ENCODE measurements at regions of chr1 and their contacts with region 1.

Region 1: GRCh38 chr1:207052911-207053769 is at the start of gene PFKFB2:
- DNase-seq: peak; percentile 100
- H3K4me3 Mint-ChIP-seq: peak within 1 kb of the TSS; percentile 89
- H3K27ac Mint-ChIP-seq: peak within 1 kb of the TSS; percentile 95
- H3K4me1 Mint-ChIP-seq: peaks cover 51% of the 10 kb centered on the region
- H3K27me3 Mint-ChIP-seq: no peaks in the 10 kb centered on the region
- CTCF ChIP-seq: peak; percentile 24
- total RNA-seq, gene PFKFB2: 21.1 and 22.0 TPM in 2 replicates

Region 2: DNA sequence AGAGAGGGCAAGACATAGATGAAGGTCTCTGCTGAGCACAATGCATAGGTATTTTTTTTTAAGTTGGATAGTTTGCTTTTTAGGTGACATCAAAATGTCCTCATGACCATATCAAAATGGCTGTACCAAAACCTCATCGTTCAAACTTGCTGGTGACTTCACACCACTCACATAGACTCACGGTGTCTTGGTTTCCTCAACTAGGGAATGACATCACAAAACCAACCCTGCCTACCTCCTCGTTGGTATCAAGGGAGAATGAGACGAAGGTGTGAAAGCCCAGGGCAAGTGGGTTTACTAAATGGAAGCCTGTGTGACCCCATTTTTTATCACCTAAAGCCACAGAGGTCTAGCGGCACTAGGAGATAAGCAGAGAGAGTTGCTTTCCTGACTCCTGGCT is 108.4 kb before region 1 on chr1:
- CTCF ChIA-PET with region 1: no interaction called
- POLR2A ChIA-PET with region 1: no interaction called
- intact Hi-C with region 1: no loop called
- DNase-seq: no peak
- H3K4me3 Mint-ChIP-seq: no peak overlapping the region
- H3K27ac Mint-ChIP-seq: no peak overlapping the region
- H3K4me1 Mint-ChIP-seq: peaks cover 8% of the 10 kb centered on the region
- H3K27me3 Mint-ChIP-seq: peaks cover 39% of the 10 kb centered on the region
- CTCF ChIP-seq: no peak

Region 3: GRCh38 chr1:207004981-207005830 is 47.9 kb before region 1 on chr1:
- CTCF ChIA-PET with region 1: interaction called, 13 read pairs
- POLR2A ChIA-PET with region 1: interaction called, 24 read pairs
- intact Hi-C with region 1: loop called (anchors 1 kb)
- DNase-seq: peak; percentile 95
- H3K4me3 Mint-ChIP-seq: peak overlapping the region; percentile 1
- H3K27ac Mint-ChIP-seq: peak overlapping the region; percentile 30
- H3K4me1 Mint-ChIP-seq: peaks cover 58% of the 10 kb centered on the region
- H3K27me3 Mint-ChIP-seq: no peaks in the 10 kb centered on the region
- CTCF ChIP-seq: peak; percentile 85

Region 4: GRCh38 chr1:207025144-207025880 is 27.8 kb before region 1 on chr1:
- CTCF ChIA-PET with region 1: interaction called, 168 read pairs
- POLR2A ChIA-PET with region 1: interaction called, 2,100 read pairs
- intact Hi-C with region 1: no loop called
- DNase-seq: no peak
- H3K4me3 Mint-ChIP-seq: peak overlapping the region; percentile 3
- H3K27ac Mint-ChIP-seq: peak overlapping the region; percentile 99
- H3K4me1 Mint-ChIP-seq: peaks cover 73% of the 10 kb centered on the region
- H3K27me3 Mint-ChIP-seq: no peaks in the 10 kb centered on the region
- CTCF ChIP-seq: no peak

Region 5: GRCh38 chr1:207040181-207040533 is 13.0 kb before region 1 on chr1:
- CTCF ChIA-PET with region 1: interaction called, 168 read pairs
- POLR2A ChIA-PET with region 1: interaction called, 2,100 read pairs
- intact Hi-C with region 1: no loop called
- DNase-seq: no peak
- H3K4me3 Mint-ChIP-seq: no peak overlapping the region
- H3K27ac Mint-ChIP-seq: no peak overlapping the region
- H3K4me1 Mint-ChIP-seq: peaks cover 19% of the 10 kb centered on the region
- H3K27me3 Mint-ChIP-seq: no peaks in the 10 kb centered on the region
- CTCF ChIP-seq: no peak

Region 6: DNA sequence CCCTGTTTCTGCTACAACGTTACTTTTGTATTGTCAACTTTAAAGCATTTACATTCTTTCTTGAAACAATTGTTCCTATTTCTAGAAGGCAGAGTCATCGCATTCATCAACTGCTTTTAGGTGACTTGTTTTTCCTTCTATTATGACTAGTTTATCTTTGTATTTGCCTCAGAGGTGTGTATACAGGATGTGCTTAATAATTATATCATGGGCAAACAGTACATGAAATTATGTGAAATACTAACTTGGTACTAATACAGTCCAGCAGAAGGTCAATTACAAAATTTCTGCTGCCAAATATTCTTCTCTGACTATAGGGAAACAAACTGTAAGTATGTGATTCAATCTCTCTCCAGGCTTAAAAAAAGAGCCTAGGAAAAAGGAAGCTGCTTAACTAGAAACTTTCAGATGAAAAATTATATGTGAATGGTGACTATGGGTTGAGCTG is 152.5 kb after region 1 on chr1:
- CTCF ChIA-PET with region 1: no interaction called
- POLR2A ChIA-PET with region 1: no interaction called
- intact Hi-C with region 1: no loop called
- DNase-seq: no peak
- H3K4me3 Mint-ChIP-seq: no peak overlapping the region
- H3K27ac Mint-ChIP-seq: peak overlapping the region; percentile 78
- H3K4me1 Mint-ChIP-seq: peaks cover 11% of the 10 kb centered on the region
- H3K27me3 Mint-ChIP-seq: no peaks in the 10 kb centered on the region
- CTCF ChIP-seq: no peak

Region 7: GRCh38 chr1:207404849-207405525 is 351.8 kb after region 1 on chr1:
- CTCF ChIA-PET with region 1: interaction called, 8 read pairs
- POLR2A ChIA-PET with region 1: interaction called, 3 read pairs
- intact Hi-C with region 1: loop called (anchors 1 kb)
- DNase-seq: peak; percentile 83
- H3K4me3 Mint-ChIP-seq: no peak overlapping the region
- H3K27ac Mint-ChIP-seq: no peak overlapping the region
- H3K4me1 Mint-ChIP-seq: peaks cover 5% of the 10 kb centered on the region
- H3K27me3 Mint-ChIP-seq: no peaks in the 10 kb centered on the region
- CTCF ChIP-seq: peak; percentile 99

Region 8: GRCh38 chr1:208207388-208208131 is 1154.4 kb after region 1 on chr1:
- CTCF ChIA-PET with region 1: no interaction called
- POLR2A ChIA-PET with region 1: no interaction called
- intact Hi-C with region 1: no loop called
- DNase-seq: peak; percentile 100
- H3K4me3 Mint-ChIP-seq: peak overlapping the region; percentile 43
- H3K27ac Mint-ChIP-seq: peak overlapping the region; percentile 89
- H3K4me1 Mint-ChIP-seq: peaks cover 30% of the 10 kb centered on the region
- H3K27me3 Mint-ChIP-seq: no peaks in the 10 kb centered on the region
- CTCF ChIP-seq: no peak

Region 9: GRCh38 chr1:208329300-208329699 is 1276.2 kb after region 1 on chr1:
- CTCF ChIA-PET with region 1: no interaction called
- POLR2A ChIA-PET with region 1: no interaction called
- intact Hi-C with region 1: no loop called
- DNase-seq: peak; percentile 15
- H3K4me3 Mint-ChIP-seq: no peak overlapping the region
- H3K27ac Mint-ChIP-seq: no peak overlapping the region
- H3K4me1 Mint-ChIP-seq: no peaks in the 10 kb centered on the region
- H3K27me3 Mint-ChIP-seq: peaks cover 86% of the 10 kb centered on the region
- CTCF ChIP-seq: no peak